Mammary epithelial cell (primary cell): ENCODE measurements at regions of chr1 and their contacts with region 1.

Region 1: DNA sequence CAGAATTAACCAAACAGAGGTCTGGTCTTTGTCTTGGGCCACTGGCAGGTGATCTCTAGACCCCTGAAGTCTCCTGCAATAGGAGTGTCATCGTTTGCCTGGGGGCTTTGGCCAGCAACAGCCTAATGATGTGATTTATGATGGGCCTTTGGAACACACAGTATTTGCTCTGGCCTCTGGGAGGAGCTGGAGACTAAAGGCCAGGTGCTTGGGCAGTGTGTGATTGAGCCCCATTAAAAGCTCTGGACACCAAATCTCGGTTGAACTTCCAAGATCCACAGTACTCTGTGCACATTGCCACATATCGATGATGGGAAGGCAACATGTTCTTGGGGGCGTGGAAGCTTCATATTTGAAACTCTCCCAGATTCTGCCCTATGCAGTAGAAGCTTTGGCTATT is 32.0 kb upstream of the TLR5 start:
- DNase-seq: peak; percentile 28
- H3K4me3 ChIP-seq: no peak overlapping the region
- H3K27ac ChIP-seq: no peak overlapping the region
- H3K4me1 ChIP-seq: no peaks in the 10 kb centered on the region
- H3K27me3 ChIP-seq: no peaks in the 10 kb centered on the region
- CTCF ChIP-seq: peak; percentile 35 to 73

Region 2: GRCh38 chr1:223244366-223245103 is 69.5 kb after region 1 on chr1:
- CTCF ChIA-PET with region 1: no interaction called
- dilution Hi-C with region 1: no loop called
- in situ Hi-C with region 1: no loop called
- intact Hi-C with region 1: loop called (anchors 2 kb)
- DNase-seq: peak; percentile 41
- H3K4me3 ChIP-seq: no peak overlapping the region
- H3K27ac ChIP-seq: no peak overlapping the region
- H3K4me1 ChIP-seq: peaks cover 5% of the 10 kb centered on the region
- H3K27me3 ChIP-seq: no peaks in the 10 kb centered on the region
- CTCF ChIP-seq: peak; percentile 8 to 24

Region 3: GRCh38 chr1:223341121-223341520 is 166.1 kb after region 1 on chr1:
- CTCF ChIA-PET with region 1: no interaction called
- dilution Hi-C with region 1: no loop called
- in situ Hi-C with region 1: no loop called
- intact Hi-C with region 1: loop called (anchors 5 kb)
- DNase-seq: peak; percentile 18
- H3K4me3 ChIP-seq: no peak overlapping the region
- H3K27ac ChIP-seq: no peak overlapping the region
- H3K4me1 ChIP-seq: no peaks in the 10 kb centered on the region
- H3K27me3 ChIP-seq: peaks cover 4% of the 10 kb centered on the region
- CTCF ChIP-seq: no peak

Region 4: DNA sequence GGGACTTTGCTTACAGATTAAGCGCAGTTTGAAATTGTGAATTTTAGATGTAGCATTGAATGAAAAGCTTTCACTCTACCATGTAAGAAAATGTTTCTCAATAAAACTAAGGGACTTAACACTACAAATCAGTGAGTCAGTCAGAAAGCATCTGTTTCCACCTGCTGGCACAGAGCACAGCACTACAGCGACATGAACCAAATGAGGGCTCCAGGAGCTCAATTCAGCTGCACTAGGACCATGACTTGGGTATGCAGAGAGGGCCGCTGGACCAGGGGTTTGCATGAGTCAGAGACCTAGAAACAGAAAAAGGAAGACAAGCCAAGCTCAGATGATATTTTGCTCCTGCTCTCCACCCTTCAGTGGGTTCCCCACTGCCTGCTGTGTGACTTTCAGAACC is 183.8 kb after region 1 on chr1:
- CTCF ChIA-PET with region 1: interaction called, 7 read pairs
- dilution Hi-C with region 1: no loop called
- in situ Hi-C with region 1: no loop called
- intact Hi-C with region 1: loop called (anchors 1 kb)
- DNase-seq: peak; percentile 21
- H3K4me3 ChIP-seq: no peak overlapping the region
- H3K27ac ChIP-seq: no peak overlapping the region
- H3K4me1 ChIP-seq: peaks cover 21% of the 10 kb centered on the region
- H3K27me3 ChIP-seq: peaks cover 7% of the 10 kb centered on the region
- CTCF ChIP-seq: peak in 1 of 2 donors; percentile 58

Region 5: DNA sequence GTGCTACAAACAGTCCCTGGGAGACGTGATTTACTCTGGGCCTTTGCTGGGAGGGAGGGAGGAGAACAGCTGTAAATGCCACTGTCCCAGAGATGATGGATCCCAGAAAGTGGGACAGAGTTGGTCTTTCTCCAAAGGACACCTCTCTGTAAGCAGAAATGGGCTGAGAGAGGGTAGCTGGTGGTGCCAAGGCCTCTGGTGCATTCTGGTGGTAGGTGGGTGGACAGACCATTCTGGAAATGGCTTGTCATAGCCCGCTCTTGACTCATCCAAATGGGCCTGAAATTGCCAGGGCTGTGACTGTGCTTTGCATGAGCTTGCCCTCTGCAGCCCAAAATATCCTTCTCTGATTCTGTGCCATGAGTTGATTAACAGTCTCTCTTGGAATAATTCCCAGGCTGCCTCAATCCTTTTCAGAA is 254.3 kb after region 1 on chr1:
- CTCF ChIA-PET with region 1: interaction called, 8 read pairs
- dilution Hi-C with region 1: no loop called
- in situ Hi-C with region 1: no loop called
- intact Hi-C with region 1: loop called (anchors 1 kb)
- DNase-seq: peak; percentile 86
- H3K4me3 ChIP-seq: no peak overlapping the region
- H3K27ac ChIP-seq: peak overlapping the region; percentile 42
- H3K4me1 ChIP-seq: peaks cover 17% of the 10 kb centered on the region
- H3K27me3 ChIP-seq: no peaks in the 10 kb centered on the region
- CTCF ChIP-seq: peak; percentile 11 to 43

Region 6: GRCh38 chr1:223531742-223532341 is 356.8 kb after region 1 on chr1:
- CTCF ChIA-PET with region 1: no interaction called
- dilution Hi-C with region 1: no loop called
- in situ Hi-C with region 1: no loop called
- intact Hi-C with region 1: loop called (anchors 1 kb)
- DNase-seq: peak; percentile 40
- H3K4me3 ChIP-seq: no peak overlapping the region
- H3K27ac ChIP-seq: no peak overlapping the region
- H3K4me1 ChIP-seq: no peaks in the 10 kb centered on the region
- H3K27me3 ChIP-seq: no peaks in the 10 kb centered on the region
- CTCF ChIP-seq: peak; percentile 80 to 93

Region 7: GRCh38 chr1:223683586-223684487 is 508.8 kb after region 1 on chr1:
- CTCF ChIA-PET with region 1: interaction called, 3 read pairs
- dilution Hi-C with region 1: no loop called
- in situ Hi-C with region 1: no loop called
- intact Hi-C with region 1: loop called (anchors 1 kb)
- DNase-seq: peak; percentile 54
- H3K4me3 ChIP-seq: no peak overlapping the region
- H3K27ac ChIP-seq: no peak overlapping the region
- H3K4me1 ChIP-seq: no peaks in the 10 kb centered on the region
- H3K27me3 ChIP-seq: no peaks in the 10 kb centered on the region
- CTCF ChIP-seq: peak; percentile 69 to 72